ENCODE measurements at regions of chr13 and their contacts with region 1.

Region 1: DNA sequence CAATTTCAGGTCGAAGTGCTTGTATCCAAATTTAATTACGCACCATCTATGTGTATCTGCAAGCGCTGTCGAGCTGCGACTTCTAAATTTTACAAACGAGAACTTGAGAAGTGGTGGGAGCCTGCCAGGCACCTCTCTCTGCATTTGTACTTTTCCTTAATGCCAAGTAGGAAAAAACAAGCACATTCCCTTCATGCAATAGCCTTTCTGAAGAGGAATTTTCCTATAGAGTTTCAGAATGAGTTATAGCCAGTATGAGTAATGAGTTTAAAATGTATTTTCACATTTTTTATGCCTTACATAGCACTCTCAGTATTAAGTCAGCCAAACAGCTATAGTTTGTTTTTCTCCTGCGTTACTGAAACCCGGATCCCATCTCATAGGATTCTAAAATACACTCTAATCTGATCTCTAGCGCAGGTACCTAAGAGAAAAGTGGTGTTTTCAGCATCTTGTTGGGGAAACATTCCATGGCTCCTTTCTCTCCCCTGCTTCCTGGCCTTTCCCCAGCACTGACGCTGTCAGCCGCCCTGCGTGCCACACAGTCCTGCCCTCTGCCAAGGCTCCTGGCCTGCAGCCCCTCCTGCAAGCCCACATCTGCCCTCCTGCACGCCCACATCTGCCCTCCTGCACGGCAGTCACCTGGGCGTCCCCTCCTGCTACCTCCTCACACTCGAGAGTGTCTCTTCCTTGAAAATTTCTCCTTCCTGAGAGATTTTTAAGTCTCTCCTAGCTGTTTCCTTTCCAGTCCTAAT is 526.9 kb downstream of the MYO16 start:
- DNase-seq: no peak
- H3K4me3 ChIP-seq: no peak overlapping the region
- H3K27ac ChIP-seq: no peak overlapping the region
- H3K4me1 ChIP-seq: peaks cover 12% of the 10 kb centered on the region
- H3K27me3 ChIP-seq: no peaks in the 10 kb centered on the region
- CTCF ChIP-seq: no peak
- EP300 ChIP-seq: no peak
- POLR2A ChIP-seq: no peak

Region 2: GRCh38 chr13:110097013-110097412 is 940.7 kb after region 1 on chr13:
- intact Hi-C with region 1: loop called in 1 of 4 experiments (anchors 5 kb)
- DNase-seq: no peak
- H3K4me3 ChIP-seq: no peak overlapping the region
- H3K27ac ChIP-seq: no peak overlapping the region
- H3K4me1 ChIP-seq: peaks cover 1% of the 10 kb centered on the region
- H3K27me3 ChIP-seq: no peaks in the 10 kb centered on the region
- CTCF ChIP-seq: no peak
- EP300 ChIP-seq: no peak
- POLR2A ChIP-seq: no peak

Region 3: GRCh38 chr13:110187641-110188161 is 1031.3 kb after region 1 on chr13:
- intact Hi-C with region 1: loop called in 1 of 4 experiments (anchors 5 kb)
- DNase-seq: no peak
- H3K4me3 ChIP-seq: no peak overlapping the region
- H3K27ac ChIP-seq: no peak overlapping the region
- H3K4me1 ChIP-seq: no peaks in the 10 kb centered on the region
- H3K27me3 ChIP-seq: no peaks in the 10 kb centered on the region
- CTCF ChIP-seq: no peak
- EP300 ChIP-seq: no peak
- POLR2A ChIP-seq: no peak

Measured in ovary (tissue), 10 donors.